Lower leg skin (tissue), 4 donors: ENCODE measurements at regions of chr10 and their contacts with region 1.

Region 1: GRCh38 chr10:102352066-102352715 is 43.3 kb upstream of the NFKB2 start:
- DNase-seq: peak in 1 of 2 donors; percentile 26
- H3K4me3 ChIP-seq: no peak overlapping the region
- CTCF ChIP-seq: peak in 1 of 3 donors; percentile 9
- POLR2A ChIP-seq: no peak

Region 2: DNA sequence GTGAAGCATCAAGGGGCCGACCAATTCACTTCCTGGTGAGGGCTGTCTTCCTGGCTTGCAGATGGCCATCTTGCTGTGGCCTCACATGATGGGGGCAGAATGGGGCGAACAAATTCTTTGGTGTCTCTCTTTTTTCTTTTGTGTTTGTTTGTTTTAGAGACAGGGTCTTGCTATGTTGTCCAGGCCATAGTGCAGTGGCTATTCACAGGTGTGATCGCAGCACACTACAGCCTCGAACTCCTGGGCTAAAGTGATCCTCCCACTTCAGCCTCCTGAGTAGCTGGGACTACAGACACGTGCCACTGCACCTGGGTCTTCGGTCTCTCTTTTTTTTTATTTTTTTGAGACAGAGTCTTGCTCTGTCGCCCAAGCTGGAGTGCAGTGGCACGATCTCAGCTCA is 179.9 kb before region 1 on chr10:
- intact Hi-C with region 1: loop called (anchors 5 kb)
- DNase-seq: no peak
- H3K4me3 ChIP-seq: no peak overlapping the region
- CTCF ChIP-seq: no peak
- POLR2A ChIP-seq: no peak

Region 3: DNA sequence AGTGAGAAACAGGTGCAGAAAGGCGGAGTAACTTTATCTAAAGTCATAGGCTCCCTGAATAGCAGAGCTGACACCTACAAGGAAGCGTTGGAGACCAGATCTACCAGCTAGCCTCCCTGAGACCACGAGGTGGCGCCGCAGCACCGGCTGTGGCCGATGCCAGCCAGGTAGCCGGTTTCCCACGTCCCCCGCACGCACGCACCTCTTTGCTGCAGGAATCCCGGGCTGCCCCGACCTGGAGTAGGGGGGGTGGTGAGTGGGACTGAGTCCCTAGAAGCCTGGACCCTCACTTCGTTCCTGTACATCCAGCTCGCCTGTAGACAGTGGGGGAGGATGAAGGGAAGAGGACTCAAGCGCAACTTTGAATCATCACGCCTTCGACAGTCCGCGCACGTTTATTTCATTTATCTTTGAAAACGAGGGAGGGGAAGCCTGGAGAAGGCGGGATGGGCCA is 122.4 kb before region 1 on chr10:
- intact Hi-C with region 1: loop called (anchors 2 kb)
- DNase-seq: peak; percentile 75 to 95
- H3K4me3 ChIP-seq: no peak overlapping the region
- CTCF ChIP-seq: peak in 1 of 3 donors; percentile 93
- POLR2A ChIP-seq: no peak